Activated CD4-positive, alpha-beta memory T cell treated with anti-CD3 and anti-CD28 coated beads for 36 hours (primary cell): ENCODE measurements at regions of chr1 and their contacts with region 1.

Region 1: DNA sequence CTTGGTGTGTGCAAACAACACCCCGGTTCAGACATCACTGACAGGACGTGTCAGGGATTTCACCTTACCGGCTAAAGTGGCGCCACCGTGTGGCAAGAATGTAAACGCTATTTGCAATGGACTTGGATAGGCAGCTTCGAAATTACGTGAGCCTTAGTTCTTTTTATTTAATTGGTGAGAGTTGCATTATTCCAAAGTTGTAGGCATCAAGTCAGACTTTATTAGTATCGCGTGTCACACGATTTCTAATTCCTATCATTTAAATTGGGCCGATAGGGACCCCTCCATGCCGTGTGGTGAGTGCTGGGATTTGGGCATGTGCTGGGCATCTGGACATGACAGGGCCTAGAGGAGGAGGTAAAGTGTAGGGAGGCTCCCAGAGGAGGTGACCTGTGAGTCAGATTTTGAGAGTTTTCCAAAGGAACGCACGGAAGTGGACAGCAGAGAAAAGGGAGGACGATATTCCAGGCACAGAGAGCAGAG is 14.5 kb upstream of the CPT2 start:
- DNase-seq: peak; percentile 89
- H3K4me3 Mint-ChIP-seq: no peak overlapping the region
- H3K27ac Mint-ChIP-seq: no peak overlapping the region
- H3K4me1 Mint-ChIP-seq: no peaks in the 10 kb centered on the region
- H3K27me3 Mint-ChIP-seq: peaks cover 11% of the 10 kb centered on the region

Region 2: DNA sequence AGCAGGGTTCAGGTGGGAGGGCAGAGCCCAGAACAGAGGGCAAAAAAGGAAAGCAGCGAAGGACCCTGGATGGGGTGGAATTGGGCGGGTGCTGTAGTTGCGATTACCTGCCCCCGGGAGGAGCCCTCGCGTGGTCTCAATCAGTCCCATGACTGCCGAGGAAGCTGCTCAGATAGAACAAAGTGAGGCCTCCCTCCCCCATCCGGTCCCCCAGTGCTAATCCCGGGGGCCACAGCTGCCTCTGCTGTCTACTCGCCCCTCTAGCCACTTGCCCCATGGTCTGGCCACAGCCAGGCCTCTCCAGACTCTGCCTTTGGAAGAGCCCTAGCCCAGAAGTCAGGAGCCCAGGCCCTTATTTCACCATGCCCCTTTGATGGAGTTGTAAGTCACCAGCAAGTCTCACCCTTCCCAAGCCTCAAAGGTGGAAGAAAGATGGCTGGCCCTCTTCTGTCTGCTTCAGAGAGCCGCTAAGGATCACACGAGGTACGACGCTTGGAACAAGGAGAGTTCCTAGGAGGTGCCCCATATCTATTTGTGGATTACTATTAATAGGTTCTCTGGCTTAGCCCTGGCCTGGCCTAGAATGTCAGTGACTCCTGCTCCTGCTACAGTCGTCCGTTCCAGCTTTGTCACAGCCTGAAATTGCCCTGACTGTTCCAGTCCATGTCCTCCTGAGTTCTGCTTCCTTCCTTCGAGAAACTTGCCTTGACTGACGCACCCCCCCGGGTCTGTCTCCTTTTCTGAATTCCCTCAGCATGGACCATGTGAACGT is 277.0 kb before region 1 on chr1:
- CTCF ChIA-PET with region 1: interaction called, 6 read pairs
- POLR2A ChIA-PET with region 1: no interaction called
- intact Hi-C with region 1: loop called (anchors 1 kb)
- DNase-seq: peak; percentile 44
- H3K4me3 Mint-ChIP-seq: no peak overlapping the region
- H3K27ac Mint-ChIP-seq: no peak overlapping the region
- H3K4me1 Mint-ChIP-seq: no peaks in the 10 kb centered on the region
- H3K27me3 Mint-ChIP-seq: no peaks in the 10 kb centered on the region

Region 3: DNA sequence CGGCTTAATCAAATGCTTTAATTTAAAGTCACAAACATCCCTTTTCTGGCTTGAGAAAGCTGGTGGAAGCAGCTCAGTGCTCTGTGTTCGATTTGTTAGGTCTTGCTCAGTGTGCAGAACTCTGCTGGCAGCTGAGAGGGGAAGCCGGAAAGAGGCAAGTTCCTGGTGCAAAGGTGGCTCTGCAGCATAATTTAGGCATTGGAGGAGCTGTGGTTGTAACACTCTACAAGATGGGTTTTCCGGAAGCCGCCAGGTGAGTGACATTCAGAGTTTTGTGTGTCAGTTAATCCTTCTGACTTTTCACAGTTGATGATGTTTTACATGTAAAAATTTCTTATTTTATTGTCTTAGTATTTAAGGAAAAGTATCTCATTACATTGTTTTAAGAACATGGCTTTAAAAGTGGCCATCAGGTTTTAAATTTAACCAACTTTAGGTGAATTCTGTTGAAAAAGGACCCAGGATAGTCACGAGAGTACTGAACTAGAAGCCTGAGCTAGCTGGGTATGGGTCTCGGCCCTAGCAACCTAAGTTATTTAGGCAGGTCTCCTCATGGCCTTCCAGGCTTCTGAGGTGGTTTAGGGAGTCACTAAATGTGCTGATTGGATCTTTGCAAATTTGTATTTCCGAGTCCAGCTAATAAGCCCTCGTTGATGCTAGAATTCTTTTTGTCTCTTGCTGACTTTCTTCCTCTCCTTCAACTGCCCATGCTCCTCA is 167.2 kb before region 1 on chr1:
- CTCF ChIA-PET with region 1: interaction called, 8 read pairs
- POLR2A ChIA-PET with region 1: no interaction called
- intact Hi-C with region 1: loop called (anchors 10 kb)
- DNase-seq: peak; percentile 86
- H3K4me3 Mint-ChIP-seq: peak overlapping the region; percentile 72
- H3K27ac Mint-ChIP-seq: peak overlapping the region; percentile 77
- H3K4me1 Mint-ChIP-seq: peaks cover 27% of the 10 kb centered on the region
- H3K27me3 Mint-ChIP-seq: no peaks in the 10 kb centered on the region